Upper lobe of right lung (tissue), 1 donor: ENCODE measurements at regions of chr4 and their contacts with region 1.

Region 1: GRCh38 chr4:52861879-52862616 is at the start of gene RASL11B:
- DNase-seq: peak; percentile 89
- ATAC-seq: peak; percentile 99
- H3K4me3 ChIP-seq: peak within 1 kb of the TSS; percentile 69
- H3K27ac ChIP-seq: peak within 1 kb of the TSS; percentile 11
- H3K4me1 ChIP-seq: peaks cover 18% of the 10 kb centered on the region
- H3K27me3 ChIP-seq: peaks cover 15% of the 10 kb centered on the region
- CTCF ChIP-seq: peak; percentile 44
- total RNA-seq, gene RASL11B: 2.2 TPM

Region 2: DNA sequence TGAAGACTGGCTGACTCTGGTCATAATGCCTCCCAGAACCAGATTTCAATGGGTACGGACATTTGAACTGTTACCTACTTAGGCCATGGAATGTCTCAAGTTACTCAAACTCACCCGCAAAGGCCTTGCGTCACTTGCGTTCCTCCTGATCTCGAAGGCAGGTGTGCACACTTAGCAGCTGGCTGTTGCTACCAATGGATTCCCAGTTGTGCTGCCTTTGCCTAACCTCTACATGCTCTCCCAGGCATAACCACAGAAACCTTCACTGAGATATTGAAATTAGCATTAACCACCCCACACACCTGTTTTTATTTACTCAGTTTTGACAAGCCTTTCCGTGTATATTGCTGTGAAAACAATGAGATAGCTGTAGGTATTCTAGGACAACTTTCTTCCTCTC is 113.6 kb before region 1 on chr4:
- intact Hi-C with region 1: loop called (anchors 10 kb)
- DNase-seq: no peak
- ATAC-seq: no peak
- H3K4me3 ChIP-seq: no peak overlapping the region
- H3K27ac ChIP-seq: no peak overlapping the region
- H3K4me1 ChIP-seq: peaks cover 4% of the 10 kb centered on the region
- H3K27me3 ChIP-seq: peaks cover 12% of the 10 kb centered on the region
- CTCF ChIP-seq: no peak

Region 3: DNA sequence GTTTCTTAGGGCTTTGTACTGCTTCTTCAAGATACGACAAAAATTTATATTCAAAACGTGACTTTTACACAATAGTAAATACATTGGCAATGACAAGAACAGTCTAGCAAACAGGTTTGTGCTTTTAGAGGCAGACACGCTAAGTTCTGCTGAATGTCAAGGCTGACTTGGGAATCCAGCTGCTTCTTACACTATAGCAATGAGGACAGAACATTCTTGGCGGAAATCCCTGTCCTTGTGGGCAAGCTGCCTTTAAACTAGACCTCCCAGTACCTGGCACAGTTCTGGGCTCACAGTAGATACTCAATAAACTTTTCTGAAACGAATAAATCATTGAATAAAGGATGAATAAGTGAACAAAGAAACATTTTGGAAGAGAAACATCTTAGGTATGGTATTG is 148.3 kb after region 1 on chr4:
- intact Hi-C with region 1: no loop called
- DNase-seq: no peak
- ATAC-seq: no peak
- H3K4me3 ChIP-seq: no peak overlapping the region
- H3K27ac ChIP-seq: no peak overlapping the region
- H3K4me1 ChIP-seq: peaks cover 10% of the 10 kb centered on the region
- H3K27me3 ChIP-seq: no peaks in the 10 kb centered on the region
- CTCF ChIP-seq: no peak

Region 4: GRCh38 chr4:53089936-53090729 is 228.1 kb after region 1 on chr4:
- intact Hi-C with region 1: no loop called
- DNase-seq: no peak
- ATAC-seq: no peak
- H3K4me3 ChIP-seq: no peak overlapping the region
- H3K27ac ChIP-seq: no peak overlapping the region
- H3K4me1 ChIP-seq: no peaks in the 10 kb centered on the region
- H3K27me3 ChIP-seq: no peaks in the 10 kb centered on the region
- CTCF ChIP-seq: no peak